Heart left ventricle (tissue), 16 donors: ENCODE measurements at regions of chr21 and their contacts with region 1.

Region 1: DNA sequence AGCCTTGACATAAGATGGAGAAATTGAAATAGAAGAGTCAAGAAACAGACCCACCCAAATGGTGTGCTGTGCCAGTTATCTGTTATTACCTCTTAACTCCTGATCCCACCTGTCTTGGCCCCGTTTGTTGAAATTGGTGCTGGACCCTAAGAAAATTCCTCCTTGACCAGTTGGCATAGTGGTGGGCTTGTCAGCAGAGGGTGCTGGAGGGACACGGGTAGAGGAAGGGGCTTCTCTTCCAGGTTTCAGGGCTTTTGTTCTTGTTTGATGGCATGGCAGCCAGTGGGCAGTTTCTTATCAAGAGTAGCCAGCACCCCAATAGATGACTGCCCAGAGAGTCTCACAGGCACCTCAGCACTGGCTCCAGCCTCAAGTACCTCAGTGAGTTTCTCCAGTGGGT is 51.6 kb downstream of the PCBP3 start:
- DNase-seq: no peak
- ATAC-seq: no peak
- H3K4me3 ChIP-seq: no peak overlapping the region
- H3K27ac ChIP-seq: no peak overlapping the region
- H3K4me1 ChIP-seq: peaks cover 0 to 9% (median 0%) of the 10 kb centered on the region in 12 donors
- H3K27me3 ChIP-seq: no peaks in the 10 kb centered on the region
- CTCF ChIP-seq: no peak
- POLR2A ChIP-seq: no peak

Region 2: DNA sequence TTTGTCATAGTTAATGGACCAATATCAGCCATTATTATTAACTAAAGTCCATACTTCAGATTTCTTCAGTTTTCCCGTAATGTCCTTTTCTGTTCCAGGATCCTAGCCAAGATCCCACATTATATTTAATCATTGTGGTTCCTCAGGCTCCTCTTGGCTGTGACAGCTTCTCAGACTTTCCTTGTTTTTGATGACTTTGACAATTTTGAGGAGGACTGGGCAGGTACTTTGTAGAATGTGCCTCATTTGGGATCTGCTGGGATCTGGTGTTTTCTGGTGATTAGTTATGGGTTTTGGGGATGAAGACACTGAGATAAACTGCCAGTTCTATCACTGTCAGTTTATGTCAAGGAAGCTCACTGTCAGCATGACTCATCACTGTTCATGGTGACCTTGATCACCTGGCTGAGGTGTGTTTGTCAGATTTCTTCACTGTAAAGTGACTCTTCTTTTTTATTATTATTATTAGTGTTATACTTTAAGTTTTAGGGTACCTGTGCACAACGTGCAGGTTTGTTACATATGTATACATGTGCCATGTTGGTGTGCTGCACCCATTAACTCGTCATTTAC is 14.7 kb after region 1 on chr21:
- intact Hi-C with region 1: loop called in 1 of 10 experiments (anchors 2 kb)
- DNase-seq: no peak
- ATAC-seq: no peak
- H3K4me3 ChIP-seq: no peak overlapping the region
- H3K27ac ChIP-seq: no peak overlapping the region
- H3K4me1 ChIP-seq: no peaks in the 10 kb centered on the region
- H3K27me3 ChIP-seq: no peaks in the 10 kb centered on the region
- CTCF ChIP-seq: no peak
- POLR2A ChIP-seq: no peak